PC-9 (cell line): ENCODE measurements at regions of chr2 and their contacts with region 1.

Region 1: DNA sequence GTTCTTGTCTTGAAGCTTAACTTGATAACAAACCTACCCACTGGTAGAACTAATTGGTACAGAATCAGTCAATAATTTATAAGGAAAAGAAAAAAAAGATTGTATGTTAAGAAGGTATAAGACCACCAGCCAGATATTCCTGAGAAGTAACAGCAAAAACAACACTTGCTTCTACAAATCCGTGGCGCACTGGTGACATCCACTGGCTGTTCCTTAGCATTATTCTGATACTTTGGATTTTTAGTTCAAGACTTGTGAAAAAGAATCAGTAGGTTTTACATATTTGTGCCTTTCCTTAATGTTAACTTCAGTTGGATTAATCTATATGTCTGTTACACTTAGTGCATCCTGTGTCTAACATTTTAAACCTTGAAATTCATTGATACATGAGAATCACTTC is 141.8 kb downstream of the GRB14 start:
- DNase-seq: peak in 1 of 2 experiments; percentile 10
- H3K4me3 ChIP-seq: no peak overlapping the region
- H3K27ac ChIP-seq: no peak overlapping the region
- H3K4me1 ChIP-seq: no peaks in the 10 kb centered on the region
- H3K27me3 ChIP-seq: no peaks in the 10 kb centered on the region
- CTCF ChIP-seq: peak; percentile 50

Region 2: DNA sequence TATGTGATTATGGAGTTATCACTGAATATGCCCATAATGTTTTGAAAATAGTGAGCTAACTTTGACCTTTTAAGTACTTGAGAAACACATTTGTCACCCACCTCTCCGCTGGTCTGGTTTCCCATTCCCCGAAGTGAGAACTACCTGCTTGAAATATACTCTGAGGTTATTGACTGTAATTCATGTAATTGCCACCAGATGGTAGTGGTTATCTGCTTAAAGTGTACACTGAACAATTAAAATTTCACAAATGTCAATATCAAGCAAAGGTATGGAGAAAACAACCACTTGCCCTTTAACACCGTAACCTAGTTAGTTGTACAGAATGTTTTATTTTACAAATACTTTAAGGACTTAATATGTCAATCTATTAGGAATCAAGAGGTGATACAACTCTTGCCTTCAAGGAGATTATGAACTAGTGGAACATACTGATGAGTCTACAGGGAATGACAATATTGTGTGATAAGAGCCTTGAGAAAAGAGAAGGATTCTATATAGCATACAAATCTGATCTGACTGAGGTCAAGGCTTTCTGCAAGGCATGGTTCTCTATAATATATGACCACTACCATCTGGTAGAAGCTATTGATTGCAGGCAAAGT is 1324.1 kb before region 1 on chr2:
- CTCF ChIA-PET with region 1: no interaction called
- POLR2A ChIA-PET with region 1: no interaction called
- intact Hi-C with region 1: loop called (anchors 5 kb)
- DNase-seq: peak in 1 of 2 experiments; percentile 41
- H3K4me3 ChIP-seq: no peak overlapping the region
- H3K27ac ChIP-seq: no peak overlapping the region
- H3K4me1 ChIP-seq: no peaks in the 10 kb centered on the region; the same call in none of the 2 replicates
- H3K27me3 ChIP-seq: no peaks in the 10 kb centered on the region
- CTCF ChIP-seq: peak; percentile 78

Region 3: GRCh38 chr2:163191372-163191771 is 1288.1 kb before region 1 on chr2:
- CTCF ChIA-PET with region 1: no interaction called
- POLR2A ChIA-PET with region 1: no interaction called
- intact Hi-C with region 1: loop called (anchors 5 kb)
- DNase-seq: peak in 1 of 2 experiments; percentile 4
- H3K4me3 ChIP-seq: no peak overlapping the region
- H3K27ac ChIP-seq: no peak overlapping the region
- H3K4me1 ChIP-seq: no peaks in the 10 kb centered on the region
- H3K27me3 ChIP-seq: no peaks in the 10 kb centered on the region
- CTCF ChIP-seq: peak; percentile 68

Region 4: GRCh38 chr2:164816046-164816445 is 336.6 kb after region 1 on chr2:
- CTCF ChIA-PET with region 1: no interaction called
- POLR2A ChIA-PET with region 1: no interaction called
- intact Hi-C with region 1: no loop called
- DNase-seq: no peak
- H3K4me3 ChIP-seq: no peak overlapping the region
- H3K27ac ChIP-seq: no peak overlapping the region
- H3K4me1 ChIP-seq: no peaks in the 10 kb centered on the region
- H3K27me3 ChIP-seq: no peaks in the 10 kb centered on the region
- CTCF ChIP-seq: no peak